Cardiac septum (tissue), 1 donor: ENCODE measurements at regions of chr22 and their contacts with region 1.

Region 1: GRCh38 chr22:30253205-30253852 is 6.8 kb upstream of the LIF start:
- DNase-seq: no peak

Region 2: DNA sequence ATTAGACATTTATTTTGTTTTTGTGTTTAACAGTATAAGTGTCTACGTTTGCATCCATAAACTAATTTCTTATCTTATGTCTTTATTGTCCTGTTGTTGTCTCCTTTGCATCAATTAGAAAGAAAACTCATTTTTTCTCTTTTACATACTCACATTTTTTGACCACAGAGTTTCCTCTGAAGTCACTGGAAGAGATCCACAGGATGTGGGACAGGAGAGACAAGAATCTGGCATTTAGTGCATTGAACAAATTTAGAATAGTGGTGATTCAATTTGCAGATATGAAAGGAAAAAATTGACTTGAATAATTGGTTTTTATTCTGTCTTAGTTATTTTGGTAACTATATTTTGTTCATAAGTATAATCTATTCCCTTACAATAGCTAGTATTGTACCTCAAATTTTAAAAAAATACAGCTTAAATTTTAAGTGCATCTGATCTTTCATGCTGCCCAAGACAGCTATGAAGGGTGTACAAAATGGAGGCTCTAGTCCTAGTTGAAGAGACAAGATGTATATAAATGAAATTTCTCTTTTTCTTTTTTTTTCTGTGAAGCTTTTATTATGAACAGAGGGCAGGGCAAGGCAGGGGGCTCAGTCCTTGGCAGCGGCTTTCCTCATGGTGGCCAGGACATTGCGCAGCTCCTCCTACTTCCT is 148.7 kb before region 1 on chr22:
- intact Hi-C with region 1: loop called (anchors 1 kb)
- DNase-seq: no peak

Region 3: GRCh38 chr22:30205281-30206115 is 47.8 kb before region 1 on chr22:
- intact Hi-C with region 1: loop called (anchors 5 kb)
- DNase-seq: peak; percentile 81

Region 4: DNA sequence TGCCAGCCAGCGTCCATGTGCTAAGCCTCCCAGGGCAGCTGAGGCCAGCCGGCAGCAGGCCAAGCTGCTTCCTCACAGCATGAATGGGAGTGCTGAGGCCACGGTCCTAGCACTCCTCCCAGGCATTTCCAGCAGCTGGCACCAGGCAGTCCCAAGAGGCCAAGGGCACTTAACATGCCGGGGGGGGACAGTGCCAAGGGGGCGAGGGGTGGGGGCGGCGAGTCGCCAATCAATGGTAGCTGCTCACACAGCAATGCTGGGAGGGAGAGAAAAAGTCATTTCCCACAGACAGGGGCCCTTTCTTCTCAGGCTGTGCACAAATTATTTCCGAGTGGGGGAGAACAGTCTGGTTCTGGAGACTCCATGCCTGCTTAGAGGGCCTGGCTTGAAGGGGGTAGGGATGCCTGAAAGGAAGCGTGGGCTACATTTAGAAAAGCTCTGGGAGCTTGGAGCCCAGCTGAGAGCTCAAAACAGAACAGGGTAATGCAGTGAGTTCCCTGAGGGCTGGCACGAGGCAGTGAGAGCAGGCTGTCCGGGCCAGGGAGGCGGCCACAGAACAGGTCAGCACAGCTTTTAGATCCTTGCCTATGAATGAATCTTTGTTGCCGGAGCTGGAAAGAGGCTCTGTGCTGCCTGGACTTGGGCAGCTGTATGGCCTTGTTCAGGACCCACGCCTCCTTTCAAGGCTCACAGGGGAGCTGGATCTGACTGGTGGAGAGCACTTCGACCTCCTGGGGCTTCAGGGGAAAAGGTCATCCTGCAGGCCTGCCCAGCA is 87.8 kb after region 1 on chr22:
- intact Hi-C with region 1: no loop called
- DNase-seq: peak; percentile 83